Sigmoid colon (tissue), 7 donors: ENCODE measurements at regions of chr18 and their contacts with region 1.

Region 1: DNA sequence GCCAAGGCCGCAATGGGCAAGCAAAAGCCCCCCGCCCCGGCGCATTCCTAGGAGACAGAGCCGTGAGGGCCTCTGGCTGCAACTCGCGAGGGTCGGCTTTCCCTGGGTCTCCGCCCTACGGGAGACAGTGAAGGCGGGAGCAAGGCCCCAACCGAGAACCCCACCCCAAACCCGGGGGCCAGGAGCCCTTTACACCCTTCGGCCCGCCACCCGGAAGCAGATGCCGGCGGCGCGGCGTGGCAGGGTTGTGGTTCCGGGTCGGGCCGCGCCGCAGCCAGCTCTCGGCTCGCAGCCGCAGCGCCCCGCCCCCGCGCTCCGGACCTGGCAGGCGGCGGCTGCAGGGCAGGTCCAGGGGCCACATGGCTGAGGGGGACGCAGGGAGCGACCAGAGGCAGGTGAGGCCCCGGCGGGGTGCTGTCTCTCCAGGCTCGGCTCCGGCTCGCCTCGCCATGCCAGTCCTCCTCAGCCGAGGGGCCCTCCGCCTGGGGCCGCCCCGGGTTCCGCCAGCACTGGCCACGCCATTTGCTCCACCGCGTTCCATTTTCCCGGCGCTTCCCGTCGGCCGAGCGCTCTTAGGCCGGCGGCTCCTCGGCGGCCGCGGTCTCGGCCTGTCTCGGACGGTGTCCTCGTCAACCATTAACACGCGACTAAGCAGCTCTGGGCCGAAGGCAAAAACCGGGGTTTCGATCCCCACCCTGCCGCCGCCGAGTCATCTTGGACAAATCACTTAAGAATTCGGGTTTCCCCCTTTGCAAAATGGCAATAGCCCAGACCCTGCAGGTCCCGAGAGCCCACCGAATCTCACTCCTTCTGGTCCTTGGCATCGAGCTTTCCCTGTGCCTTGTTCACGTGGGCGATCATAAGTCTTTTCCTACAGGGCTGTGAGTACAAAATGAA is at the start of gene IMPACT:
- DNase-seq: peak; percentile 89
- H3K4me3 ChIP-seq: peak within 1 kb of the TSS; percentile 83 to 90 (median 85)
- H3K27ac ChIP-seq: peak within 1 kb of the TSS; percentile 81 to 90 (median 87)
- H3K4me1 ChIP-seq: peaks cover 0 to 11% (median 8%) of the 10 kb centered on the region in 4 donors
- H3K27me3 ChIP-seq: peaks cover 0 to 18% (median 0%) of the 10 kb centered on the region in 3 donors
- CTCF ChIP-seq: no peak
- EP300 ChIP-seq: no peak
- POLR2A ChIP-seq: peak in 1 of 2 donors; percentile 9
- total RNA-seq, gene IMPACT: 15.6 to 24.6 (median 19.1) TPM

Region 2: DNA sequence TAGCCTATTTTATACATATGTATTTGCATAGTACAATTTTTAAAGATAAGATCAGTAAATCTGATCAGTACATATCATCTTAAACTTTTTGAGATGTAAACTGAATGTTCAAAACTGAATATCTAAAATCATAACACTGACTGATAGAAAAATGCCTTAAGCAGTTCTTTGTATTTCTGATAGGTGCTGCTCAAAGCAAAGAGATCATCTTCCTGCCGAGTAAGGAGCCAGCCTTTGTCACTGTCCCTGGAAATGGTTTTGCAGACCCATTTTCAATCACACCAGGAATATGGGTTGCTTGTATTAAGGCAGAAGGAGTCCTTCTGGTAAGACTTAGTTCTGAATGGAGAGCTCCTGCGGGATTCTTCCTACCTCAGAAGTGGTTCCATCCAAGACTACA is 602.4 kb before region 1 on chr18:
- intact Hi-C with region 1: no loop called
- DNase-seq: no peak
- H3K4me3 ChIP-seq: no peak overlapping the region
- H3K27ac ChIP-seq: no peak overlapping the region
- H3K4me1 ChIP-seq: peaks cover 0 to 28% (median 24%) of the 10 kb centered on the region in 4 donors
- H3K27me3 ChIP-seq: no peaks in the 10 kb centered on the region
- CTCF ChIP-seq: no peak
- EP300 ChIP-seq: no peak
- POLR2A ChIP-seq: no peak

Region 3: DNA sequence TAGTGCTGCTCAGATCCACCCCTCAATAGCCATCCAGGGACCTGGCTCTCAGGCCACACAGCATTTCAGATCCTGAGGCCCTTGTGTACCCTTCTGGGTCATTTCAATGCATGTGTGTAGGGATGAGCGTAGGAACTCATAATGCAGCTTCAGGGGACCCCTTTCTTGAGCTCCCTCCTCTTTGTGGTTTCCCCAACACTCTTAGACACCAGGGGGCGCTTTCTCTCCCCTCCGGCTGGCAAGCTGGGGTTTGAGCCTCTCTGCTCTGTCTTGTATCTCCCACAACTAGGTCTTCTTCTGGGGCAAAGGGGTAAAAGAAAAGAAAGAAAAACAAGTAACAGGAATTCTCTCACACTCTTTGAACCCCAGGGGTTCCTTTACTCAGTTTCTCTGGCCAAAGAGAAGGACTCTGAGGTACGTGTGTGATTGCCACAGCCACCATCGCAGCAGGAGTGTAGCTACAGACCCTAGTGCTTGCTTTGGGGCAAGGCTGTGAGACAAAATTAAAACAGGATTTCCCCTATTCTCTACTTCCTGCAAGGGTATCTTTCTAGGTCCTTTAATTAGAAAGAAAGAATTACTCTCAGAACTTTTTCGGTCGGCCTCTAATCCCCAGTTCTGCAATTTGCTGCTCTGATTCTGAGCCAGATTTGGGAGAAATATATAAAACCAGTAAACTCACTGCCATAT is 249.8 kb before region 1 on chr18:
- intact Hi-C with region 1: loop called (anchors 5 kb)
- DNase-seq: peak; percentile 83
- H3K4me3 ChIP-seq: no peak overlapping the region
- H3K27ac ChIP-seq: no peak overlapping the region
- H3K4me1 ChIP-seq: peaks cover 0 to 7% (median 0%) of the 10 kb centered on the region in 4 donors
- H3K27me3 ChIP-seq: no peaks in the 10 kb centered on the region
- CTCF ChIP-seq: peak; percentile 57 to 76 (median 61)
- EP300 ChIP-seq: no peak
- POLR2A ChIP-seq: no peak

Region 4: GRCh38 chr18:24362758-24363157 is 63.9 kb before region 1 on chr18:
- intact Hi-C with region 1: loop called (anchors 5 kb)
- DNase-seq: no peak
- H3K4me3 ChIP-seq: no peak overlapping the region
- H3K27ac ChIP-seq: no peak overlapping the region
- H3K4me1 ChIP-seq: no peaks in the 10 kb centered on the region
- H3K27me3 ChIP-seq: no peaks in the 10 kb centered on the region
- CTCF ChIP-seq: no peak
- EP300 ChIP-seq: no peak
- POLR2A ChIP-seq: no peak

Region 5: DNA sequence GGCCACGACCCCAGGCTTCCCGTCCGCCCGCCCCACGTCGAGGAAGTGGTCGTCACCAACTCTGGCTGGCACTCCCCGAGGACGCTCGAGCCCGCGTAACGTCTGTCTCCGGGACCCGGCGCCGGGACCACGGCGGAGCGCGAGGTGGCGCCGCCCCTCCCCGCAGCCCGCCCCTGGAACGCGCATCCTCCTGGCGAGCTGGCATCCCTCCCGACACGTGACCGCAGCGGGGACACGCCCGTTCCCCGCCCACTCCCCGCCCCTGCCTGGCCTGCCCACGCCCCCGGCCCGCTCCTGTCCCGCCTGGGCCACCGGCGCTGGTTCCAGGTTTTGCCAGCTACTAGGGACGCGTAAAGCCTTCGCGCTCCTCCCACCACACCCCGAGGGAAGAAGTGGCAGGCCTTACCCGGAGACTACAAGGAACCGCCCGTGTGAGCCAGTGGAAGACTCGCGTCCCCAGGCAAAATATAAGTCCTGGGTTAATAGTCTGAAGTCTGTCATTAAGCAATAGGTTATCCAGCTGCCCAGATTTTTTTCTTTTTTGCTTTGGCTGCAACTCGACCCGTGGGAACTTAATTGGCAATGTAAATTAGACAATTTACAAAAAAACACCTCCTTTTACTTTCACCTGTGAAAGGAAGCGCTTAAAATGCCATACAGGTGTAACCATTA is 28.8 kb before region 1 on chr18 and contains the start of gene OSBPL1A:
- intact Hi-C with region 1: loop called (anchors 1 kb)
- DNase-seq: peak; percentile 98
- H3K4me3 ChIP-seq: peak within 1 kb of the TSS; percentile 69 to 88 (median 73)
- H3K27ac ChIP-seq: peak within 1 kb of the TSS; percentile 74 to 91 (median 86)
- H3K4me1 ChIP-seq: peaks cover 0 to 13% (median 9%) of the 10 kb centered on the region in 4 donors
- H3K27me3 ChIP-seq: no peaks in the 10 kb centered on the region
- CTCF ChIP-seq: no peak
- EP300 ChIP-seq: peak in 1 of 4 donors; percentile 10
- POLR2A ChIP-seq: no peak
- total RNA-seq, gene OSBPL1A: 71.3 to 110 (median 94.6) TPM